GM18951 (cell line): ENCODE measurements at regions of chr5 and their contacts with region 1.

Region 1: GRCh38 chr5:176660860-176661641 is 13.8 kb downstream of the TSPAN17 start:
- POLR2A ChIP-seq: no peak

Region 2: DNA sequence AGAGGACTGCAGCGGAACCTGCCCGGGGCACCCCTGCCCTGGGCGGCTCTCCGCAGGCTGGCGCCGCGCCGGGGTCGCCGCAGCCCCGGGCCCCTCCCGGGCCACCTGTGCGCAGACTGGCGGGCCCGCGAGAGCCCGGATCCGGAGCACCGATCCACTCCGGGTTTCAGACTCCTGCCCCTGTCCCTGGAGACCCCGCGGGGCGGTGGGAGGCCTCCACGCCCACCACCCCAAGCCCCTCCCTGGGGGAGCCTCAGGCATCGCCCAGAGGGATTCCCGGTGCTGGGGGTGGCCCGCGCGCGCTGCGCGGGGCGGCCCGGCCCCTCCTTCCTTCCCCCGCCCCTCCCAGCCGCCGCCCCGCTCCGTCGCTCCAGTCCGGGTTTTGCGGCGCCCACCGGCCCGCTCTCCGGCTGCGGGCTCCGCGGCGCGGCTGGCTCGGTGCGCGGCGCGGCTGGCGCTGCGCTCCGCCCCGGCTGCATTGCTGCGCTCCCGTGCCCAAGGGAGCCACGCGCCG is 149.1 kb after region 1 on chr5 and contains the start of gene UNC5A:
- in situ Hi-C with region 1: no loop called
- POLR2A ChIP-seq: no peak

Region 3: GRCh38 chr5:176866707-176867310 is 205.8 kb after region 1 on chr5:
- in situ Hi-C with region 1: no loop called
- POLR2A ChIP-seq: no peak

Region 4: GRCh38 chr5:176959051-176959450 is 298.0 kb after region 1 on chr5:
- in situ Hi-C with region 1: loop called (anchors 10 kb)
- POLR2A ChIP-seq: no peak

Region 5: GRCh38 chr5:177113566-177114424 is 452.7 kb after region 1 on chr5:
- in situ Hi-C with region 1: loop called (anchors 25 kb)
- POLR2A ChIP-seq: no peak